ENCODE measurements at regions of chr6 and their contacts with region 1.

Region 1: GRCh38 chr6:141988954-141989705 is 143.6 kb upstream of the GJE1 start:
- DNase-seq: peak; percentile 44
- H3K4me3 Mint-ChIP-seq: no peak overlapping the region
- H3K27ac Mint-ChIP-seq: no peak overlapping the region
- H3K4me1 Mint-ChIP-seq: peaks cover 3% of the 10 kb centered on the region
- H3K27me3 Mint-ChIP-seq: peaks cover 1% of the 10 kb centered on the region

Region 2: DNA sequence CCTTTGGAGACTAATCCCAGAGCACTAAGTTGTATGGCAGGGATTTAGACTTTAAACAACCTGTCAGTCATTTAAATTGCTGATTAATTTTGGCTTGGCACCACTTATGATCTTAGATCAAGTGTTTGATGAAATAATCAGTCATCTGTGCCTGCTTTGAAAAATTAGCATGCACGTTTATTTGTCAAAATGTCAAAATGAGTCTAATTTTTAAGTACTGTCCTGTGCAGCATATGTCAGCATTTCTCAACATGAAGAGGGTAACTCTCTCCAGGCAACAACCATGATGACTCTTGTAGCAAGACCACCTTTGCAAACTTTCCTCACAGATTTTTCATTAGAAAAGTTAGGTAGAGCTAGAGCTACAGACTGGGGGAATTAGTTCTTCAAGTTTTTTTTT is 12.1 kb before region 1 on chr6:
- CTCF ChIA-PET with region 1: interaction called, 14 read pairs
- POLR2A ChIA-PET with region 1: no interaction called
- intact Hi-C with region 1: no loop called
- DNase-seq: no peak
- H3K4me3 Mint-ChIP-seq: no peak overlapping the region
- H3K27ac Mint-ChIP-seq: no peak overlapping the region
- H3K4me1 Mint-ChIP-seq: peaks cover 6% of the 10 kb centered on the region
- H3K27me3 Mint-ChIP-seq: no peaks in the 10 kb centered on the region

Region 3: DNA sequence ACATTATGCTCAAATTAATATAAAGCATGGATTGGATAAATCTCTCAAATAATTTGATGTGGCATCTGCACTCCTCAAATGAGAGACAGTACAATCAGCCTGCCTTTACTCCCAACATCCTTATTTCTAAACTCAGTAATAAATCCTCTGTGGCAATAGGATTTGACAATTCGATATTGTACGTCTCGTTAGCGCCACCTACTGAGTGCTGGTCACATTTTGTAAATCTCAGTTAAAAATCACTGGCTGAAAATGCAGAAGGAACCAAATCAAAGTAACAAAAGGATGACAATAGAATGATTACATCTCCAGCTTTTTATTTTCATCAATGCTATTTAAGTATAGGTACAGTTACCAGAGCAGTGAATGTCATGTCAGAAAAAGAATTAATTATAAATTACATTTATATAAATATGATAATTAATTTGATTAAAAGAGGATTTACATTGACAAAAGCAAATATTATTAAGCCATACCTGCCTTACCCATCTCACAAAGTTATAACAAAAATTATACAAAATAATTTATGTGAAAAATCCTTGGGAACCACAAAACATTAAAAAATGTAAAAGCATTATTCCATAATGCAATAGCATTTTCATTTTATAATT is 123.4 kb after region 1 on chr6:
- CTCF ChIA-PET with region 1: interaction called, 64 read pairs
- POLR2A ChIA-PET with region 1: no interaction called
- intact Hi-C with region 1: loop called (anchors 1 kb)
- DNase-seq: peak; percentile 75
- H3K4me3 Mint-ChIP-seq: no peak overlapping the region
- H3K27ac Mint-ChIP-seq: no peak overlapping the region
- H3K4me1 Mint-ChIP-seq: no peaks in the 10 kb centered on the region
- H3K27me3 Mint-ChIP-seq: peaks cover 2% of the 10 kb centered on the region

Region 4: GRCh38 chr6:142207265-142207877 is 218.2 kb after region 1 on chr6:
- CTCF ChIA-PET with region 1: interaction called, 8 read pairs
- POLR2A ChIA-PET with region 1: no interaction called
- intact Hi-C with region 1: loop called (anchors 1 kb)
- DNase-seq: peak; percentile 49
- H3K4me3 Mint-ChIP-seq: no peak overlapping the region
- H3K27ac Mint-ChIP-seq: no peak overlapping the region
- H3K4me1 Mint-ChIP-seq: no peaks in the 10 kb centered on the region
- H3K27me3 Mint-ChIP-seq: no peaks in the 10 kb centered on the region

Measured in activated CD4-positive, alpha-beta memory T cell treated with anti-CD3 and anti-CD28 coated beads for 36 hours (primary cell).